Activated CD8-positive, alpha-beta T cell treated with anti-CD3 and anti-CD28 coated beads, Interleukin-2, amount 10 ng/mL, durations not matched to agents 7 days and 5 days (primary cell): ENCODE measurements at regions of chr15 and their contacts with region 1.

Region 1: DNA sequence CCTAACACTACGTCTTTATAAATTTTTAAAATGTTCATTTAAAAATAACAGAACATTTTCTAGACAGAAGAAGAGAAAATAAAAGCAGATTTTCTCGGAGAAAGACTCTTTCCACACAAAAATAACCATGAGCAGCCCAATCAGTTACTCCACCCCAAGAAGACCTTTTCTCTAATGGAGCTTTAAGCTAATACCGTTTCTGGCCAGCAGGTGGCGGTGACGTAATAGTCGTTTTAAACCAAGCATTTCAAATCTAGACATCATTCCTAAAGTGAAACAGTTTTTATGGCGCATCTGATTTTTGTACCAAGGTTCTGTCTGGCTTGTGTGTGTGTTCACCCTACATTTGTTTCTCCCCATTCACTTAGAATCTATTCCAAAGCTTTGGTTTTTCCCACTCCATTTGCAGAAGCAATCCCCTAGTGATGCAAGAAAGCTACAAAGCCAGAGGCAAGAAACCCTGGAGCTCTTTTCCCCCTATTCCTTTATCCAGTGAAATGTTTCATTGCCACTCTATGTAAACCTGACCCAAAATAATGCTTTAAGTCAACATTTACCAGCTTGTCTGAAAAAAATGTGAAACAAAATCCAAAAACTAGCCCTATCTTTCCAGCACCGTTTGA is 336.7 kb upstream of the IGF1R start:
- DNase-seq: peak; percentile 83
- ATAC-seq: no peak
- H3K4me3 Mint-ChIP-seq: no peak overlapping the region
- H3K27ac Mint-ChIP-seq: no peak overlapping the region
- H3K4me1 Mint-ChIP-seq: no peaks in the 10 kb centered on the region
- H3K27me3 Mint-ChIP-seq: peaks cover 3% of the 10 kb centered on the region

Region 2: DNA sequence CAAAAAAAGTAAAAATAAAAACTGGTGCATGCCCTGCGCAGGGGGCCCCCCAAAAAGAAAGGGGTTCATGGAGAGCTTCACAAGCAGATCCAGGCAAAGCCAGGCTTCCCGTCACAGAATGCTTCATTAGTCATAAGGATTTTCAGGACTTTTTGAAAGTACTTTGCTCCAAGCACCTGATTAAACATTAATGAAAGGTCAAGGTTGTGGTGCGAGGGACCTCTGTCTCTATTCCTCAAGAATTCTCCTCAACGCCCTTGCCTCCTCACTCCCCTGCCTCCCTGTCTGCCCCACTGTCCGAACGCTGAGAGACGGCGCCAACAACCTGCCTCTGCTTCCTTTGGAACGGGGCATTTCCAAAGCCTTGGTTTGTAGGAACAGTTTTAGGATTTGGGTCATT is 96.6 kb after region 1 on chr15:
- CTCF ChIA-PET with region 1: no interaction called
- POLR2A ChIA-PET with region 1: no interaction called
- DNase-seq: no peak
- ATAC-seq: no peak
- H3K4me3 Mint-ChIP-seq: no peak overlapping the region
- H3K27ac Mint-ChIP-seq: no peak overlapping the region
- H3K4me1 Mint-ChIP-seq: no peaks in the 10 kb centered on the region
- H3K27me3 Mint-ChIP-seq: peaks cover 3% of the 10 kb centered on the region

Region 3: GRCh38 chr15:98421419-98422129 is 109.9 kb after region 1 on chr15:
- CTCF ChIA-PET with region 1: interaction called, 42 read pairs
- POLR2A ChIA-PET with region 1: interaction called, 4 read pairs
- DNase-seq: peak; percentile 69
- ATAC-seq: peak; percentile 91
- H3K4me3 Mint-ChIP-seq: no peak overlapping the region
- H3K27ac Mint-ChIP-seq: no peak overlapping the region
- H3K4me1 Mint-ChIP-seq: peaks cover 6% of the 10 kb centered on the region
- H3K27me3 Mint-ChIP-seq: peaks cover 15% of the 10 kb centered on the region

Region 4: DNA sequence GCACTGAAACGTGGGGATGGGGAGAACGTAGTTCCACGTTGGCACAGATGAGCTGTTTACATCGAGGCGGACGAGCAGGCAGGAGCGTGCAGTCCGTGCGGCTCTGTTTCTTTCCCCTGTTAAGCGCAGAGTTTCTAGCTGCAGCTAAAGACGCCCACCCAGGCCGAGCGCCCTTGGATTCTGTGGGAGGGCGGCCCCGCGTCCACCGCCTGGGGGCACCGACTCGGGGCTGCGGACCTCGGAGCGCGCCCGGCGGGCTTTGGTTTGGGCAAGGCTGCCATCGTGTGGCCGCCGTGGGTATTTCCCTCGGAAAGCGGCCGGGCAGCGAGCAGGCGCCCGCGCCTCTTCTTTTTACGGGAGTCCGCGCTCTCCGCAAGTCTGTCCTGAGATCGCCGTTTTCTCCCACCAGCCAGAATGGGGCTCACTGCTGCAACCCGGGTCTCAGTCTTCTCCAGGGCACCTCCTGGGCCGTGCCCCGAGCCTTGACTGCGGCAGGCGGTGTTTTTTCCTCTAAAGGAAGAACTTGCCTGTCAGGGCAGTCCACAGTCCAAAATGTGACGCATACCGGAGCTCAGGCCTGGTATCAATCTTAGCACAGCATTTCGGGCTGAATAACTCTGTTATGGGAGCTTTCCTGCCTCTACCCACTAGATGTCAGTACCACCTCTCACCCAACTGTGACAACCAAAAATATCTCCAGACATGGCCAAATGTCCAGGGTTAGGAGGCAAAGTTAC is 116.7 kb after region 1 on chr15:
- CTCF ChIA-PET with region 1: interaction called, 42 read pairs
- POLR2A ChIA-PET with region 1: no interaction called
- DNase-seq: peak; percentile 69
- ATAC-seq: peak; percentile 89
- H3K4me3 Mint-ChIP-seq: peak overlapping the region; percentile 34
- H3K27ac Mint-ChIP-seq: no peak overlapping the region
- H3K4me1 Mint-ChIP-seq: peaks cover 8% of the 10 kb centered on the region
- H3K27me3 Mint-ChIP-seq: peaks cover 18% of the 10 kb centered on the region